ENCODE measurements at regions of chr17 and their contacts with region 1.

Region 1: GRCh38 chr17:39777534-39778365 is 40.0 kb downstream of the GRB7 start:
- DNase-seq: peak in 1 of 5 donors; percentile 47
- H3K4me3 ChIP-seq: peak overlapping the region; percentile 73
- H3K4me3 Mint-ChIP-seq: peak overlapping the region; percentile 94 to 99 (median 96)
- H3K27ac ChIP-seq: peak overlapping the region; percentile 58
- H3K27ac Mint-ChIP-seq: peak overlapping the region; percentile 85 to 99 (median 97)
- H3K4me1 ChIP-seq: peaks cover 83% of the 10 kb centered on the region
- H3K4me1 Mint-ChIP-seq: peaks cover 70 to 81% (median 80%) of the 10 kb centered on the region in 3 donors
- H3K27me3 ChIP-seq: no peaks in the 10 kb centered on the region
- H3K27me3 Mint-ChIP-seq: no peaks in the 10 kb centered on the region

Region 2: GRCh38 chr17:39235555-39236449 is 541.9 kb before region 1 on chr17:
- CTCF ChIA-PET with region 1: no interaction called
- POLR2A ChIA-PET with region 1: no interaction called
- DNase-seq: peak; percentile 14 to 62 (median 48)
- H3K4me3 ChIP-seq: no peak overlapping the region
- H3K4me3 Mint-ChIP-seq: peak overlapping the region in 2 of 7 donors; percentile 5 to 26
- H3K27ac ChIP-seq: no peak overlapping the region
- H3K27ac Mint-ChIP-seq: peak overlapping the region; percentile 34 to 93 (median 83)
- H3K4me1 ChIP-seq: peaks cover 53% of the 10 kb centered on the region
- H3K4me1 Mint-ChIP-seq: peaks cover 33 to 45% (median 42%) of the 10 kb centered on the region in 3 donors
- H3K27me3 ChIP-seq: no peaks in the 10 kb centered on the region
- H3K27me3 Mint-ChIP-seq: peaks cover 7 to 13% of the 10 kb centered on the region in 2 donors

Region 3: GRCh38 chr17:39794249-39794970 is 16.7 kb after region 1 on chr17:
- CTCF ChIA-PET with region 1: interaction called, 7 read pairs
- POLR2A ChIA-PET with region 1: interaction called, 14 read pairs
- DNase-seq: peak in 3 of 5 donors; percentile 45 to 57 (median 48)
- H3K4me3 ChIP-seq: peak overlapping the region; percentile 17
- H3K4me3 Mint-ChIP-seq: peak overlapping the region; percentile 22 to 82 (median 74)
- H3K27ac ChIP-seq: no peak overlapping the region
- H3K27ac Mint-ChIP-seq: peak overlapping the region; percentile 81 to 97 (median 92)
- H3K4me1 ChIP-seq: peaks cover 71% of the 10 kb centered on the region
- H3K4me1 Mint-ChIP-seq: peaks cover 67 to 85% (median 84%) of the 10 kb centered on the region in 3 donors
- H3K27me3 ChIP-seq: no peaks in the 10 kb centered on the region
- H3K27me3 Mint-ChIP-seq: no peaks in the 10 kb centered on the region

Region 4: GRCh38 chr17:39813631-39814030 is 35.9 kb after region 1 on chr17:
- CTCF ChIA-PET with region 1: interaction called, 7 read pairs
- POLR2A ChIA-PET with region 1: interaction called, 12 read pairs
- DNase-seq: peak; percentile 49 to 82 (median 79)
- H3K4me3 ChIP-seq: peak overlapping the region; percentile 13
- H3K4me3 Mint-ChIP-seq: peak overlapping the region; percentile 57 to 85 (median 79)
- H3K27ac ChIP-seq: peak overlapping the region; percentile 5
- H3K27ac Mint-ChIP-seq: peak overlapping the region; percentile 81 to 97 (median 90)
- H3K4me1 ChIP-seq: peaks cover 76% of the 10 kb centered on the region
- H3K4me1 Mint-ChIP-seq: peaks cover 67 to 93% (median 86%) of the 10 kb centered on the region in 3 donors
- H3K27me3 ChIP-seq: no peaks in the 10 kb centered on the region
- H3K27me3 Mint-ChIP-seq: no peaks in the 10 kb centered on the region